Tibial artery (tissue), 4 donors: ENCODE measurements at regions of chr6 and their contacts with region 1.

Region 1: GRCh38 chr6:56637640-56638039 is 5.0 kb downstream of the DST start:
- DNase-seq: no peak
- H3K4me3 ChIP-seq: no peak overlapping the region
- H3K27ac ChIP-seq: no peak overlapping the region
- H3K4me1 ChIP-seq: peaks cover 0 to 16% (median 2%) of the 10 kb centered on the region in 4 donors
- H3K27me3 ChIP-seq: no peaks in the 10 kb centered on the region
- CTCF ChIP-seq: peak; percentile 62 to 86

Region 2: GRCh38 chr6:56699066-56699654 is 61.5 kb after region 1 on chr6:
- intact Hi-C with region 1: loop called (anchors 2 kb)
- DNase-seq: no peak
- H3K4me3 ChIP-seq: no peak overlapping the region
- H3K27ac ChIP-seq: no peak overlapping the region
- H3K4me1 ChIP-seq: peaks cover 0 to 17% (median 5%) of the 10 kb centered on the region in 4 donors
- H3K27me3 ChIP-seq: no peaks in the 10 kb centered on the region
- CTCF ChIP-seq: peak; percentile 52 to 64

Region 3: GRCh38 chr6:56851541-56852259 is 214.1 kb after region 1 on chr6:
- intact Hi-C with region 1: loop called (anchors 2 kb)
- DNase-seq: peak in 1 of 2 donors; percentile 42
- H3K4me3 ChIP-seq: peak overlapping the region; percentile 55 to 72
- H3K27ac ChIP-seq: peak overlapping the region; percentile 47 to 64
- H3K4me1 ChIP-seq: peaks cover 0 to 20% (median 5%) of the 10 kb centered on the region in 4 donors
- H3K27me3 ChIP-seq: no peaks in the 10 kb centered on the region
- CTCF ChIP-seq: peak; percentile 61 to 64